ENCODE measurements at regions of chr12 and their contacts with region 1.

Region 1: GRCh38 chr12:63706336-63706735 is 38.0 kb upstream of the DPY19L2 start:
- DNase-seq: no peak
- ATAC-seq: no peak
- H3K4me3 ChIP-seq: no peak overlapping the region
- H3K27ac ChIP-seq: no peak overlapping the region
- H3K4me1 ChIP-seq: no peaks in the 10 kb centered on the region
- H3K27me3 ChIP-seq: no peaks in the 10 kb centered on the region
- CTCF ChIP-seq: no peak

Region 2: GRCh38 chr12:63955831-63956609 is 249.7 kb after region 1 on chr12:
- CTCF ChIA-PET with region 1: no interaction called
- POLR2A ChIA-PET with region 1: interaction called, 11 read pairs
- in situ Hi-C with region 1: no loop called
- intact Hi-C with region 1: no loop called
- DNase-seq: no peak
- ATAC-seq: no peak
- H3K4me3 ChIP-seq: no peak overlapping the region
- H3K27ac ChIP-seq: no peak overlapping the region
- H3K4me1 ChIP-seq: peaks cover 21% of the 10 kb centered on the region; the same call in 1 of the 2 replicates
- H3K27me3 ChIP-seq: no peaks in the 10 kb centered on the region
- CTCF ChIP-seq: no peak

Region 3: GRCh38 chr12:64039281-64039871 is 333.0 kb after region 1 on chr12:
- CTCF ChIA-PET with region 1: no interaction called
- POLR2A ChIA-PET with region 1: interaction called, 10 read pairs
- in situ Hi-C with region 1: no loop called
- intact Hi-C with region 1: no loop called
- DNase-seq: peak; percentile 38
- ATAC-seq: peak; percentile 87
- H3K4me3 ChIP-seq: peak overlapping the region; percentile 3 to 41; a peak in 2 of 4 replicates
- H3K27ac ChIP-seq: peak overlapping the region; percentile 84
- H3K4me1 ChIP-seq: peaks cover 29% of the 10 kb centered on the region
- H3K27me3 ChIP-seq: no peaks in the 10 kb centered on the region
- CTCF ChIP-seq: no peak